ENCODE measurements at regions of chr7 and their contacts with region 1.

Region 1: GRCh38 chr7:7577888-7578287 is 11.2 kb downstream of the MIOS start:
- DNase-seq: no peak
- ATAC-seq: no peak
- H3K4me3 ChIP-seq: no peak overlapping the region
- H3K4me3 Mint-ChIP-seq: no peak overlapping the region
- H3K27ac ChIP-seq: no peak overlapping the region
- H3K27ac Mint-ChIP-seq: no peak overlapping the region
- H3K4me1 ChIP-seq: no peaks in the 10 kb centered on the region
- H3K4me1 Mint-ChIP-seq: peaks cover 1 to 9% (median 6%) of the 10 kb centered on the region in 3 donors
- H3K27me3 ChIP-seq: no peaks in the 10 kb centered on the region
- H3K27me3 Mint-ChIP-seq: no peaks in the 10 kb centered on the region

Region 2: GRCh38 chr7:7090460-7090859 is 487.4 kb before region 1 on chr7:
- CTCF ChIA-PET with region 1: interaction called in 1 of 2 experiments, 10 read pairs
- POLR2A ChIA-PET with region 1: no interaction called
- DNase-seq: no peak
- ATAC-seq: no peak
- H3K4me3 ChIP-seq: no peak overlapping the region
- H3K4me3 Mint-ChIP-seq: no peak overlapping the region
- H3K27ac ChIP-seq: no peak overlapping the region
- H3K27ac Mint-ChIP-seq: no peak overlapping the region
- H3K4me1 ChIP-seq: no peaks in the 10 kb centered on the region
- H3K4me1 Mint-ChIP-seq: no peaks in the 10 kb centered on the region
- H3K27me3 ChIP-seq: peaks cover 0 to 12% of the 10 kb centered on the region in 2 experiments
- H3K27me3 Mint-ChIP-seq: peaks cover 29 to 37% of the 10 kb centered on the region in 2 donors

Region 3: DNA sequence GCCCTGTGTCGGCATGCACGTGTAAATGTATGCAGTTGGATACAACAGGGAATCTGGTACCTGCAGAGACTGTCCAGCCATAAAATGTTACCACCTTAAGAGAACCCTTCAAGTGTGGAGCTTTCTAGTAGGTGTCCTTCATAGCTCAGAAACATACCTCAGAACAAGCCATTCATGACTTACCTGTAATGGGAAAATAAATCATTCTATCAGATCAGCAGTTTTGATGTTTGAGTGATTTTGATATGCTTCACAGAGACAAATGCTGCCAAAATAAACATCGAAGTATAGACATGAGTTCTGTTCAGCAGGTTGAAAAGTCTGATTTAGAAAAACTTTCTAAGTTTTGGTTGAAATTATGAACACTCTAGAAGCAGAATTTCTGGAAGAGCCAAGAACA is 29.1 kb after region 1 on chr7:
- CTCF ChIA-PET with region 1: no interaction called
- POLR2A ChIA-PET with region 1: no interaction called
- DNase-seq: no peak
- ATAC-seq: no peak
- H3K4me3 ChIP-seq: no peak overlapping the region
- H3K4me3 Mint-ChIP-seq: no peak overlapping the region
- H3K27ac ChIP-seq: no peak overlapping the region
- H3K27ac Mint-ChIP-seq: no peak overlapping the region
- H3K4me1 ChIP-seq: no peaks in the 10 kb centered on the region
- H3K4me1 Mint-ChIP-seq: no peaks in the 10 kb centered on the region
- H3K27me3 ChIP-seq: no peaks in the 10 kb centered on the region
- H3K27me3 Mint-ChIP-seq: no peaks in the 10 kb centered on the region